ENCODE measurements at regions of chr22 and their contacts with region 1.

Region 1: GRCh38 chr22:38317122-38317994 is at the start of gene CSNK1E:
- DNase-seq: peak; percentile 45 to 81
- H3K4me3 ChIP-seq: peak within 1 kb of the TSS; percentile 85
- H3K27ac ChIP-seq: peak within 1 kb of the TSS; percentile 90
- H3K4me1 ChIP-seq: peaks cover 45% of the 10 kb centered on the region
- H3K27me3 ChIP-seq: no peaks in the 10 kb centered on the region
- CTCF ChIP-seq: no peak
- total RNA-seq, gene CSNK1E: 331 and 348 TPM in 2 replicates

Region 2: DNA sequence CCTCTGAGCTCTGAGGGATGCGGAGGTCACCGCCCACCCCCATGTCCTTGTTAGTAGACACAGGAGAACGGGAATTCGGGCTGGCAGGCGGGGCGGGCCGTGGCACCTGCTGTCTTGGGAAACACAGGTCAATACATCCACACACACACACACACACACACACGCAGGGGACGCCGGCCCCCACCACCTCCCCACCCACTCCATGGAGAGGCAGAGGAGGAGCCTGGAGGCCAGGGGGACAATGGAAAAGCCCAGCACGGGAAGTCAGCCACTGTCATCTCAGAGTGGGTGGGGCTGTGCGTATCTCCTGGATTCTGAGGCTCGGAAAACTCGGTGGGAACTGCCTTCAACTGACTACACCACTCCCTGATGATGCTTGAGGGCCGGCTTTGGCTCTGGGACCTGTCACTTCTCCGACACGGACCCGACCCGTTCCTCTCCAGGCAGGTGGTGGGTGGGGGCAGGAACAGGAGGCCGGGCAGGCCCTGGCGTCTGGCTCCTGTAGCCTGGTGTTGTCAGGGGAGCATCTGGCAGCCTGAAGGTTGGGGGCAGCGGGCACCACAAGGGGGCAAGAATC is 26.1 kb before region 1 on chr22:
- CTCF ChIA-PET with region 1: interaction called, 10 read pairs
- POLR2A ChIA-PET with region 1: interaction called, 4 read pairs
- intact Hi-C with region 1: no loop called
- DNase-seq: peak; percentile 24 to 52
- H3K4me3 ChIP-seq: no peak overlapping the region
- H3K27ac ChIP-seq: peak overlapping the region; percentile 94
- H3K4me1 ChIP-seq: peaks cover 73% of the 10 kb centered on the region
- H3K27me3 ChIP-seq: no peaks in the 10 kb centered on the region
- CTCF ChIP-seq: no peak

Region 3: DNA sequence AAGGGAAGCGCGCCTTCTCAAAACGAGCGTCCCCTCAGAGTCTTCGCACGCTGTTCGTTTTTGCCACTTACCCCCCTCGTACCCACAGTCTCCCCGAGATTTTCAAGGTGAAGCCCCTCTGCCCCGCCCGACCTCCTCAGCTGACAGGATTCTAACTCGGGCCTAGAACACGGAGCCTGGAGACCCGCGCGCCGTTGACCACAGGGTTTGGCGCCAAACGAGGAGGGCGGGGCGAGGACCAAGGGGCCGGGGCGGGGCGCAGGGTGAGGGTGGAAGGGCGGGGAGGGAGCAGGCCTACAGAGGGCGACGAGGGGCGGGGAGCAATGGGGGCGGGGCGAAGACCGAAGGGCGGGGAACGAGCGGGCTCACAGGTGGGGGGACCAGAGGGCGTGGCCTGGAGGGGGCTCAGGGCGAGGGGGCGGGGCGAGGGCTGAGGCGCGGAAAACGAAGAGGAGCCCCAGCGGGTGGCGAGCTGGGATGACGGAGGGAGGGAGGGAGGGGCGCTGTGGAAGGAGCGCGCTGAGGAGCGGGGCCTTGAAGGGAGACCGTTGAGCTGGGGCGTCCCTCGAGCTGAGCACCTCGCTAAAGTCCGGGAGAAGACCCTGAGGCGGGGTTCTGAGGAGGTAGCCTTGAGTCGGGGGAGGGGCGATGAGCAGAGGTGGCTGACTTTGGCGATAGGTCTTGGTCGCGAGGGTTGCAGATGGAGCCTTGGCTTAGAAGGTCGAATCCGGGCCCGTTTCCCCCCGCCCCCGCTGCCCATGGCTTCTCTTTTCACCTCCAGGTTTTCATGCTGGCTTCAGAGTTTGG is 252.8 kb after region 1 on chr22 and contains the start of gene DMC1:
- CTCF ChIA-PET with region 1: interaction called, 17 read pairs
- POLR2A ChIA-PET with region 1: interaction called, 8 read pairs
- intact Hi-C with region 1: no loop called
- DNase-seq: peak; percentile 77 to 91
- H3K4me3 ChIP-seq: peak within 1 kb of the TSS; percentile 64
- H3K27ac ChIP-seq: no peak within 1 kb of the TSS
- H3K4me1 ChIP-seq: peaks cover 10% of the 10 kb centered on the region
- H3K27me3 ChIP-seq: no peaks in the 10 kb centered on the region
- CTCF ChIP-seq: no peak
- total RNA-seq, gene DMC1: 5.6 and 6.3 TPM in 2 replicates

Measured in PC-9 (cell line).